GM18951 (cell line): ENCODE measurements at regions of chr17 and their contacts with region 1.

Region 1: GRCh38 chr17:28335201-28335955 is at the starts of genes IFT20 and TNFAIP1:
- POLR2A ChIP-seq: peak; percentile 92

Region 2: GRCh38 chr17:28041068-28041843 is 294.1 kb before region 1 on chr17:
- in situ Hi-C with region 1: loop called (anchors 10 kb)
- POLR2A ChIP-seq: peak; percentile 90